Heart right ventricle (tissue), 16 donors: ENCODE measurements at regions of chr11 and their contacts with region 1.

Region 1: GRCh38 chr11:59668950-59669610 is at the start of gene PATL1:
- DNase-seq: peak; percentile 99 to 100
- ATAC-seq: peak; percentile 96 to 99 (median 98)
- H3K4me3 ChIP-seq: peak within 1 kb of the TSS; percentile 55 to 98 (median 90)
- H3K27ac ChIP-seq: peak within 1 kb of the TSS; percentile 75 to 99 (median 96)
- H3K4me1 ChIP-seq: peaks cover 0 to 43% (median 22%) of the 10 kb centered on the region in 9 donors
- H3K27me3 ChIP-seq: no peaks in the 10 kb centered on the region
- CTCF ChIP-seq: peak in 1 of 9 donors; percentile 1
- total RNA-seq, gene PATL1: 20.2 to 30.4 (median 25.2) TPM

Region 2: DNA sequence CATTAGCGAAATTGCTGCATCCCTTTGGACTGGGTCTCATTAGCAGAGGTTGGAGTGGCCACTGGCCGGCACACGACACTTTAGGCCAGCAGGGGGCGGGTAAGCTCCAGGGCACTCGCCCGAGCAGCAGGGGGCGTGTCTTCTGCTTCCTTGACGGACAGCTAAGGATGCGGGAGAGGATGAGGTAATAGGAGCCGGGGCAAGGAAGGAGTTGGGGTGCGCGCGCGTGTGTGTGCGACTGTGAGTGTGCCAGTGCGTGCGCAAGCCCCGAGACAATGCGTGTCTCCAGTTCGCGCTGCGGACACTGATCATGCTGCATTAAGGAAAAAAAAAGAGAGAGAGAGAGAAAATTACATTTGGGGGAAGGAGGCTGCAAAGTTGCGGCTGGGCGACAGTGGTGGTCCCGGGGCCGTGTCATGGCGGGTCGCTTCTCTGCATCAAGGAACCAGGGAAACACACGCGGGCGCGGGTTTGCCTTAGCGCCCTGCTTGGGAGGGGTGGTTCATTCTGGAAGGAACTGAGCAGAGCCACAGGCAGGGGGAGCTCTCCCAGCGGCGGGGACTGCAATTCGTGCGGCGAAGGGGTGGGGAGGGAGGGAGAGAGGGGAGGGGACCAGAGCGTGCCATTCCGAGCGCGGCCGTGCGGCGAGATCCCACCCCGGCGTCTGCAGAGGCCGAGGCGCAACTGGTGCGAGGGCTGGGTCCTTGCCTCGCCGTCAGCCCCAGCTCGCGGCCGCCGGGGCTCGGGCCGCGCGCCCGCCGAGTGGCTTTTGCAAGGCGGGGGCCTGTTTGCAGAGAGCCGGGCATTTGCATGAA is 497.4 kb before region 1 on chr11 and contains the start of gene DTX4:
- intact Hi-C with region 1: loop called in 1 of 10 experiments (anchors 10 kb)
- DNase-seq: peak; percentile 91 to 93
- ATAC-seq: peak; percentile 93 to 99 (median 96)
- H3K4me3 ChIP-seq: peak within 1 kb of the TSS; percentile 45 to 74 (median 68)
- H3K27ac ChIP-seq: peak within 1 kb of the TSS in 7 of 10 donors; percentile 26 to 80 (median 56)
- H3K4me1 ChIP-seq: peaks cover 0 to 34% (median 17%) of the 10 kb centered on the region in 9 donors
- H3K27me3 ChIP-seq: peaks cover 0 to 16% (median 0%) of the 10 kb centered on the region in 7 donors
- CTCF ChIP-seq: peak; percentile 71 to 88 (median 78)
- total RNA-seq, gene DTX4: 0.98 to 4.1 (median 2.7) TPM

Region 3: GRCh38 chr11:59380263-59381059 is 288.6 kb before region 1 on chr11:
- intact Hi-C with region 1: no loop called
- DNase-seq: no peak
- ATAC-seq: no peak
- H3K4me3 ChIP-seq: no peak overlapping the region
- H3K27ac ChIP-seq: no peak overlapping the region
- H3K4me1 ChIP-seq: no peaks in the 10 kb centered on the region
- H3K27me3 ChIP-seq: no peaks in the 10 kb centered on the region
- CTCF ChIP-seq: no peak

Region 4: GRCh38 chr11:59545179-59546020 is 123.7 kb before region 1 on chr11:
- intact Hi-C with region 1: loop called in 5 of 10 experiments (anchors 5 to 10 kb)
- DNase-seq: no peak
- ATAC-seq: no peak
- H3K4me3 ChIP-seq: no peak overlapping the region
- H3K27ac ChIP-seq: peak overlapping the region in 1 of 10 donors; percentile 8
- H3K4me1 ChIP-seq: peaks cover 0 to 23% (median 8%) of the 10 kb centered on the region in 9 donors
- H3K27me3 ChIP-seq: no peaks in the 10 kb centered on the region
- CTCF ChIP-seq: no peak

Region 5: GRCh38 chr11:59560702-59561469 is 108.2 kb before region 1 on chr11:
- intact Hi-C with region 1: loop called in 1 of 10 experiments (anchors 5 kb)
- DNase-seq: peak; percentile 86 to 87
- ATAC-seq: peak; percentile 86 to 94 (median 91)
- H3K4me3 ChIP-seq: peak overlapping the region; percentile 54 to 91 (median 80)
- H3K27ac ChIP-seq: peak overlapping the region; percentile 64 to 87 (median 78)
- H3K4me1 ChIP-seq: peaks cover 0 to 38% (median 21%) of the 10 kb centered on the region in 9 donors
- H3K27me3 ChIP-seq: no peaks in the 10 kb centered on the region
- CTCF ChIP-seq: no peak

Region 6: GRCh38 chr11:59615637-59616395 is 53.3 kb before region 1 on chr11 and contains the start of gene OSBP:
- intact Hi-C with region 1: loop called in 6 of 10 experiments (anchors 1 to 5 kb)
- DNase-seq: peak; percentile 97 to 100
- ATAC-seq: peak; percentile 93 to 97 (median 94)
- H3K4me3 ChIP-seq: peak within 1 kb of the TSS; percentile 66 to 93 (median 86)
- H3K27ac ChIP-seq: peak within 1 kb of the TSS; percentile 71 to 97 (median 92)
- H3K4me1 ChIP-seq: peaks cover 0 to 47% (median 42%) of the 10 kb centered on the region in 9 donors
- H3K27me3 ChIP-seq: no peaks in the 10 kb centered on the region
- CTCF ChIP-seq: peak in 2 of 9 donors; percentile 0 to 27
- total RNA-seq, gene OSBP: 30.2 to 46.8 (median 39.3) TPM

Region 7: GRCh38 chr11:59802639-59803176 is 133.6 kb after region 1 on chr11:
- intact Hi-C with region 1: loop called in 5 of 10 experiments (anchors 5 to 10 kb)
- DNase-seq: peak in 1 of 2 donors; percentile 62
- ATAC-seq: peak; percentile 72 to 87 (median 80)
- H3K4me3 ChIP-seq: peak overlapping the region in 1 of 10 donors; percentile 11
- H3K27ac ChIP-seq: peak overlapping the region in 9 of 10 donors; percentile 5 to 83 (median 50)
- H3K4me1 ChIP-seq: peaks cover 0 to 22% (median 12%) of the 10 kb centered on the region in 9 donors
- H3K27me3 ChIP-seq: no peaks in the 10 kb centered on the region
- CTCF ChIP-seq: peak; percentile 45 to 83 (median 72)